CD4-positive, alpha-beta memory T cell (primary cell): ENCODE measurements at regions of chr4 and their contacts with region 1.

Region 1: DNA sequence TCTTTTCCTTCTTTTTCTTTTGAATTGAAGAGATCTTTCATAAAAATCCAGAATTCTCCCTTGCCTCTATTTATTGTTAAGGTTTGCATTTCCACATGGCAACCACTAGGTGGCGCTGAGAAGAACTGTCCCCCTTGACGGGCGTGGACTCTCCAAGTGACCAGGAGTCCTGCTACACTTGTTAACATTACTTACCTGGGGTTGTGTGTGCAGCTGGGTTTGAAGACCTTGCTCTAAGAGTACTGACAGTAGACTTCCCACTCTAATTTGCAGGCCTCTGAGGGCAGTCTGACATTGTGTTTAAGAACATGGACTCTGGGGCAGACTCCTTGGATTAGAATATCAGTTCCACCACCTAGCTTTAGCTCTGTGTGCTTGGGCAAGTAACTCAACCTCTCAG is 52.8 kb downstream of the GPRIN3 start:
- DNase-seq: peak; percentile 46 to 61 (median 55)
- H3K4me3 ChIP-seq: no peak overlapping the region
- H3K4me3 Mint-ChIP-seq: peak overlapping the region in 4 of 8 donors; percentile 4 to 45 (median 11)
- H3K27ac ChIP-seq: peak overlapping the region; percentile 45
- H3K27ac Mint-ChIP-seq: peak overlapping the region; percentile 72 to 93 (median 86)
- H3K4me1 ChIP-seq: peaks cover 83% of the 10 kb centered on the region
- H3K4me1 Mint-ChIP-seq: peaks cover 73 to 99% (median 86%) of the 10 kb centered on the region in 4 donors
- H3K27me3 ChIP-seq: no peaks in the 10 kb centered on the region
- H3K27me3 Mint-ChIP-seq: no peaks in the 10 kb centered on the region

Region 2: GRCh38 chr4:89226665-89227574 is 27.9 kb before region 1 on chr4:
- CTCF ChIA-PET with region 1: interaction called, 15 read pairs
- POLR2A ChIA-PET with region 1: interaction called, 3 read pairs
- intact Hi-C with region 1: no loop called
- DNase-seq: peak; percentile 71 to 76 (median 73)
- H3K4me3 ChIP-seq: no peak overlapping the region
- H3K4me3 Mint-ChIP-seq: peak overlapping the region; percentile 27 to 76 (median 57)
- H3K27ac ChIP-seq: no peak overlapping the region
- H3K27ac Mint-ChIP-seq: peak overlapping the region; percentile 4 to 83 (median 58)
- H3K4me1 ChIP-seq: peaks cover 4% of the 10 kb centered on the region
- H3K4me1 Mint-ChIP-seq: peaks cover 1 to 5% (median 3%) of the 10 kb centered on the region in 4 donors
- H3K27me3 ChIP-seq: no peaks in the 10 kb centered on the region
- H3K27me3 Mint-ChIP-seq: no peaks in the 10 kb centered on the region

Region 3: GRCh38 chr4:89268679-89269078 is 13.8 kb after region 1 on chr4:
- CTCF ChIA-PET with region 1: interaction called, 171 read pairs
- POLR2A ChIA-PET with region 1: interaction called, 6 read pairs
- intact Hi-C with region 1: loop called (anchors 1 kb)
- DNase-seq: no peak
- H3K4me3 ChIP-seq: no peak overlapping the region
- H3K4me3 Mint-ChIP-seq: peak overlapping the region in 3 of 8 donors; percentile 22 to 47 (median 39)
- H3K27ac ChIP-seq: no peak overlapping the region
- H3K27ac Mint-ChIP-seq: peak overlapping the region in 6 of 7 donors; percentile 4 to 88 (median 76)
- H3K4me1 ChIP-seq: peaks cover 94% of the 10 kb centered on the region
- H3K4me1 Mint-ChIP-seq: peaks cover 64 to 86% (median 82%) of the 10 kb centered on the region in 4 donors
- H3K27me3 ChIP-seq: no peaks in the 10 kb centered on the region
- H3K27me3 Mint-ChIP-seq: no peaks in the 10 kb centered on the region

Region 4: DNA sequence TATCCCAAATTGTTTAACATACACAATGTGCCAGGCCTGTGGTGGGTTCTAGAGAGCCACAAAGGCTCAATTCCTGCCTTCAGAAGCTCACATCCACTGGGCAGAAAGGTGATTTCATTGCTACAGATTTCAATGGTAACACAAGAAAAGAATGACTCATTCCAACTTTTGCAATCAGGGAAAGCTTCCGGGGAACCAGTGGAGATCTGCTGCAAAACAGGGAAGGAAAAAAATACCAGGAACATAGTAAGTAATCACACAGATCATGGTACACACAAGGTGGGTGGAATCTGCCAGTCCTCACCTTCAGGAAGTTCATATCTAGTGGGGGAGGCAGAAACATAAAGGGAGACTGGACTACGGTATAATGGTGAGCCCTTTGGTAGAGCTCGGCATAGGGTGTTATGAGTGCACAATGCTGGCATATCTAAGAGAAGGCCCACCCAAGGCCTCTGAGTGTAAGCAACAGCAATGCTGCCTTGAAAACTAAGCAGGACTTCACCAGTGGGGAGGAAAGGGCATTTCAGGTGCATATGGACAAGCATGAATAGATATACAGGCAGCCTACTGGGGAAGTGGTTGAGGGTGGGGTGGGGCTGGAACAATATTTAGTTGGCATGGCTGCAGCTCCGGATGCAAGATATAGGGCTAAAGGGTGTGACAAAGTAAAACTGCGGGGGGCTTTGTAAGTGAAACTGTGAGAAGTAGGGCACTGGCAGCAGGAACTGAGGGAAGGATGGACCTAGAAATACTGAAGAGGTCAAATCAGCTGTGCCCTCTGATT is 28.6 kb after region 1 on chr4:
- CTCF ChIA-PET with region 1: interaction called, 171 read pairs
- POLR2A ChIA-PET with region 1: interaction called, 118 read pairs
- intact Hi-C with region 1: loop called (anchors 2 kb)
- DNase-seq: peak; percentile 83 to 89 (median 88)
- H3K4me3 ChIP-seq: peak overlapping the region; percentile 9 to 26
- H3K4me3 Mint-ChIP-seq: peak overlapping the region; percentile 83 to 91 (median 86)
- H3K27ac ChIP-seq: peak overlapping the region; percentile 86
- H3K27ac Mint-ChIP-seq: peak overlapping the region in 3 of 7 donors; percentile 99 to 100 (median 99)
- H3K4me1 ChIP-seq: peaks cover 97% of the 10 kb centered on the region
- H3K4me1 Mint-ChIP-seq: peaks cover 32 to 68% (median 47%) of the 10 kb centered on the region in 4 donors
- H3K27me3 ChIP-seq: no peaks in the 10 kb centered on the region
- H3K27me3 Mint-ChIP-seq: no peaks in the 10 kb centered on the region

Region 5: GRCh38 chr4:89316931-89317366 is 62.1 kb after region 1 on chr4:
- CTCF ChIA-PET with region 1: interaction called, 15 read pairs
- POLR2A ChIA-PET with region 1: interaction called, 9 read pairs
- intact Hi-C with region 1: no loop called
- DNase-seq: peak in 4 of 5 donors; percentile 39 to 74 (median 42)
- H3K4me3 ChIP-seq: peak overlapping the region; percentile 8 to 18
- H3K4me3 Mint-ChIP-seq: peak overlapping the region; percentile 43 to 80 (median 72)
- H3K27ac ChIP-seq: peak overlapping the region; percentile 55
- H3K27ac Mint-ChIP-seq: peak overlapping the region; percentile 87 to 95 (median 93)
- H3K4me1 ChIP-seq: peaks cover 34% of the 10 kb centered on the region
- H3K4me1 Mint-ChIP-seq: peaks cover 27 to 48% (median 35%) of the 10 kb centered on the region in 4 donors
- H3K27me3 ChIP-seq: no peaks in the 10 kb centered on the region
- H3K27me3 Mint-ChIP-seq: no peaks in the 10 kb centered on the region